GM10248 (cell line): ENCODE measurements at regions of chr6 and their contacts with region 1.

Region 1: DNA sequence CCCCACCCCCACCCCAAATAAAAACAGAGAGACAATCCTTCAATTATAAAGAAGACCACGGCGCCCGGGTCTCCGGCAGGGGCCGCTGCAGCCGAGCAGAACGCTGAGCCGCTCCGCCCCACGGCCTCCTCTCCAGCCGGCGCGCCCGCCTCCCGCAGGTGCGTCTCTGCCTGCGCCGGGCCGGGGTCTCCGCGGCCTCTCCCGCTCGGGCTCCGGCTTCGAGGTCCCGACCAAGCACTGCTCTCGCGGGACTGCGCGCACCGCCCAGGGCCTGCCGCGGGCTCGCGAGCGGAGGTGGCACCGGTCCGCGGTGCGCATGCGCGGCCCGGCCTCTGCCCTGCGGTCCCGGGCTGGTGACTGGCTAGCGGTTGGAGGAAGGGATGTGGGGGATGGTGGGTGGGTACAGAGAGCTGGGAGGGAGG is 241 bp upstream of the SIRT5 start:
- DNase-seq: peak; percentile 97
- CTCF ChIP-seq: peak; percentile 61

Region 2: GRCh38 chr6:13336553-13336952 is 237.6 kb before region 1 on chr6:
- CTCF ChIA-PET with region 1: interaction called, 19 read pairs
- POLR2A ChIA-PET with region 1: no interaction called
- DNase-seq: peak; percentile 68
- CTCF ChIP-seq: peak; percentile 88

Region 3: DNA sequence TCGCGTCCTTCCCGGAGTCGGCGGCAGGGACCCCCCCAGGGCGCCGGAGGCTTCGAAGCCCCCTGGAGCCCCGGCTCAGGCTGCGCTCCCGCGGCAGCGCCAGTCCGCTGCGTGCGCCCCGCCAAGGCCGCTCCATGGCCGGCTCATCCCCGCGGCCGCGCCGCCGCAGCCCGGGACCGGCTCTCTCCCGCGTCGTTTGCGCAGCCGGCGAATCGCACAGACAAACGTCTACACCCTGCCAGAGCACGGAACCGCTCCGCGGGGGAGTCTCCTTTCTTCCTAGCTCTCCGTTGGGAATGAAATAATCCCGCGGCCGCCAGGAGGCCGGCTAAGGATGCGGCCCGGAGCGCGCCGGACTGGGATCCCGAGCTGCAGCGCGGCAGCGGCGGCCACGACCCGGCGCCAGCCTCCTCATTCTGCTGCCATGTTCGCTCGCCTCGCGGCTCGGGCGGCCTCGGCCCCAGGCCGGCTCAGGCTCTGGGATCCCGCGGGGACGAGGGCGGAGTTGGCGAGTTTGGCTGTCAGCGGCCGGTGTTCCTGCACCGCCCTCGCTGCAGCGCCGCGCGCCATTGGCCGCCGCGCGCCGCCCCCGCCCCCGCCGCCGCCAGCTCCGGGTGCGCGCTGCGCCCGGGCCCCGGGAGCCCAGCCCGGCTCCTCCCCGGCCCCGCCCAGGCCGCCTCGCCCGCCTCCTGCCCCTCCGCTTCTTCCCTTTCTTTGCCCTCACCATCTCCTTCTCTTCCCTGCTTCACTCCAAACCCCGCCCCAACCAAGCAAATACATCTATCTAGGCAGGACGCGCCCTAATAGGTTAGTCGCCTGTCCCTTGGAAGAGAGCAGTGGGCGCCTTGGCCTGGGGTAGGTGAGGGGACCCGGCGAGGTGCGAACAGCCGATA is 86.8 kb before region 1 on chr6 and contains the start of gene GFOD1:
- CTCF ChIA-PET with region 1: interaction called, 13 read pairs
- POLR2A ChIA-PET with region 1: no interaction called
- DNase-seq: peak; percentile 94
- CTCF ChIP-seq: no peak

Region 4: GRCh38 chr6:13538084-13538483 is 36.1 kb before region 1 on chr6:
- CTCF ChIA-PET with region 1: interaction called, 12 read pairs
- POLR2A ChIA-PET with region 1: no interaction called
- DNase-seq: peak; percentile 60
- CTCF ChIP-seq: peak; percentile 16

Region 5: DNA sequence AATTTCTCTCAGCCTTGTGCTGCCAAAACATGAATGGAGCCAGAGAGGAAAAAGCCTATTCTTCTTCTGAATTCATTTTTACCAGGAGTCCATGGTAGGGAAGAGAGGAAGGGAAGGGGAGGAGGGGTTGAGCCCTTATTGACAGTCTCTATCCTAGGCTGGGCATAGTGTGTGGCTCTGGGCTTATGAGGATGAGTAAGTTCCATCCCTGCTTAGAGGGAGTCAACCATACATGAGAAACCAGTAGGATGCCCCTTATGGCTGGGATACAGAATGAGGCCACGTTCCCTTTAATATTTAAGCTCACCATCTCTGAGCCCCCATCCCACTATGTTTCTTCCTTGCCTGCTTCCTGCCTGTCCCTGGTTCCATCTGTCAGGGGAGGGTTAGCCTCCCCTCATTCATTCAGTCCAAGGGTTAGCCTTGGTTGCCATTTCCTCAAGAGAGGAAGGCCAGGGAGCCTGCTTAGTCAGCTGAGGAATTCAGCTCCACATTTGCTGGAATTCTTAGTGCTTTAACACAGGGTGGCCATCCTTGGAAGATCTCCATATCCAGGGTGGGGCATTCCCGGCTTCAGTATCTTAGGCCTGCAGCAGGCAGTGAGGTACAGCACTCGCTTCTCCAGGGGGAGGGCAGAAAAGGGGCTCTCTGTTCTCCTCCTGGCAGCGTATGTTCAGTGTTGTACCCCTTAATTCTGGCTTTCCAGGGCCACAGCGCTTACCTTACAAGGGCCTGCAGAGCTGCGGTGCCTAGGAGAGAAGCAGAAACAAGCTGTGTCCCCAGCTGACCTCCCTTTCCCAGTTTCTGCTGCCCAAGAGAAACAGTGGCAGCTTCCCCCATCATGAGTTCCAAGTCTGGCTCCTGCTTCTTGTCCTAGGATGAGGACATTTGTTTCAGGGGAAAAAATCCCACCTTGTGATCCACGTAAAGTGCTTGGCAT is 12.7 kb after region 1 on chr6:
- CTCF ChIA-PET with region 1: interaction called, 45 read pairs
- POLR2A ChIA-PET with region 1: no interaction called
- DNase-seq: no peak
- CTCF ChIP-seq: no peak

Region 6: DNA sequence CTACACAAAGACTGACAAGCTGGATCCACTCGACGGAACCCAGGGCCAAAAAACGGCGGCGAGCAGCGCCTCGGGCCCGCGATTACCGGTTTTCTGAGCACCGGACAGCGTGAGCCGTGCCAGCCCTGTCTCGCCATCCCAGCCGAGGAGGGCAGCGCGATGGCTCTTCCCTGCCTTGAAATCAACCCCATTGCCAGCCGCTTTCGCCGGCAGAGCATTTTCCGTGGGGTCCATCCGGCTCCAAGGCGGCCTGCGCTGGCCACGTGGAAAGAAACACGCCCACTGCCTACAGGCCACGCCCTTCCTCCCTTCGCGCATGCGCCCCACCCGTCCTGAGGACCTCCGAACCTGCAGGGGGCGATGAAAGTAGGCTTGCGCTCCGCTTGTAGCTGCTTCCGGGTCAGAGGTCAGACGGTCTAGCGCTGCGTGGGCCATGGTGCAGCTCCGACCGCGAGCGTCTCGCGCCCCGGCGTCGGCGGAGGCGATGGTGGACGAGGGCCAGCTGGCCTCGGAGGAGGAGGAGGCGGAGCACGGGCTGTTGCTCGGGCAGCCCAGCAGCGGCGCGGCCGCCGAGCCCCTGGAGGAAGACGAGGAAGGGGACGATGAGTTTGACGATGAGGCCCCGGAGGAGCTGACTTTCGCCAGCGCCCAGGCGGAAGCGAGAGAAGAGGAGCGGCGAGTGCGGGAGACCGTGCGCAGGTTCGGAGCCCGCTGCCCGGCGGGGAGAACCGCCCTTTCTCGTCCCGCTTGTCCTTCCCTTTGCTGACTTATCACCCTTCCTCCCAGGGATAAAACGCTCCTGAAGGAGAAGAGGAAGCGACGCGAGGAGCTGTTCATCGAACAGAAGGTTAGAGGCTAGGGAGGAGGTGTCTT is 41.0 kb after region 1 on chr6 and contains the start of gene NOL7:
- CTCF ChIA-PET with region 1: interaction called, 30 read pairs
- POLR2A ChIA-PET with region 1: interaction called, 3 read pairs
- DNase-seq: peak; percentile 98
- CTCF ChIP-seq: peak; percentile 92